MCF 10A (cell line): ENCODE measurements at regions of chr4 and their contacts with region 1.

Region 1: DNA sequence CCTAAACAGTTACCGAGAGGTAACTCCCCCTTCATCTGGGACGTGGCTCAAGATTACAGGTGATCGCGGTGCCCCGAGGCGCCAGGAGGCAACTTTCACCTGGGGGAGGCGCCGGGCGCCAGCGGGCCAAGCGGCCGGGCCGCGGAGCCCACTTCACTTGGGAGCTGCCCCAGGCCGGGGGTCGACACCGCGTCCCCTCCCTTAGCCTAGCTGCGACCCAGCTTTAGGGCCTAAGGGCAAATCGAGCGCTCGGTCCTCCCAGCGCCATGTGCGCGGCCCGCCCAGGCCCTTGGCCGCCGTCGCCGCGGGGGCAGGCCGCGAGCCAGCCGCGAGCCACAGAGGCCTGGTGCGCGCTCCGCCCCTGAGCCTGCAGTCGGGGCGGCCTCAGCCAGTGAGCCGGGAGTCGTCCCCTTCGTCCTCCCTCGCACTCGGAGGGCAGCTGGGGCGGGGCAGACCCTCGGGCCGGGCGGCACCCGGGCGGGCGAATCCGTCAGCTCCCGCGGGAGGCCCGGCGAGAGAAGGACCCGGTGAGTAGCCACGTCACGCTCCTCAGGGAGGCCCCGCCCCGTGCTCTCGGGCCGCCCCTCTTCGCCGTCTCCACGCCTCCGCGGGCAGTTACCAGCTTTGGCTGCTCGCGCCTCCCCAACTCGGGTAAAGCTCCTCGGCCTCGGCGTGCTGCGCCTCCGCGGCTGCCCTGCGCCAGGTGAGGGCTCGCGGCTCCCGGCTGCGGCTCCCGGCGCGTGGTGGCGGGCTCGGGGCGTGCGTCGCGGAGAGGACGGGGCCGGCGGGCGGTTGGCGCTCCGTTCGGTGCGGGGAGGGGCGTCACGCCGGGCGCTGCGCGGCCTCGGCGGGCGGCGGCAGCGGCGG is at the start of gene LARP1B:
- DNase-seq: peak; percentile 97
- H3K4me3 Mint-ChIP-seq: peak within 1 kb of the TSS; percentile 91
- H3K27ac Mint-ChIP-seq: peak within 1 kb of the TSS; percentile 96
- H3K4me1 Mint-ChIP-seq: peaks cover 6% of the 10 kb centered on the region
- H3K27me3 Mint-ChIP-seq: no peaks in the 10 kb centered on the region
- CTCF ChIP-seq: no peak
- total RNA-seq, gene LARP1B: 56.1 and 62.8 TPM in 2 replicates

Region 2: GRCh38 chr4:127868196-127868595 is 192.7 kb before region 1 on chr4:
- CTCF ChIA-PET with region 1: no interaction called
- POLR2A ChIA-PET with region 1: no interaction called
- intact Hi-C with region 1: no loop called
- DNase-seq: no peak
- H3K4me3 Mint-ChIP-seq: no peak overlapping the region
- H3K27ac Mint-ChIP-seq: no peak overlapping the region
- H3K4me1 Mint-ChIP-seq: peaks cover 23% of the 10 kb centered on the region
- H3K27me3 Mint-ChIP-seq: no peaks in the 10 kb centered on the region
- CTCF ChIP-seq: no peak

Region 3: GRCh38 chr4:127880764-127881562 is 180.0 kb before region 1 on chr4 and contains the start of gene PLK4:
- CTCF ChIA-PET with region 1: no interaction called
- POLR2A ChIA-PET with region 1: interaction called, 17 read pairs
- intact Hi-C with region 1: loop called (anchors 10 kb)
- DNase-seq: peak; percentile 96
- H3K4me3 Mint-ChIP-seq: peak within 1 kb of the TSS; percentile 100
- H3K27ac Mint-ChIP-seq: peak within 1 kb of the TSS; percentile 99
- H3K4me1 Mint-ChIP-seq: peaks cover 18% of the 10 kb centered on the region
- H3K27me3 Mint-ChIP-seq: no peaks in the 10 kb centered on the region
- CTCF ChIP-seq: no peak
- total RNA-seq, gene PLK4: 8.9 and 10.9 TPM in 2 replicates

Region 4: DNA sequence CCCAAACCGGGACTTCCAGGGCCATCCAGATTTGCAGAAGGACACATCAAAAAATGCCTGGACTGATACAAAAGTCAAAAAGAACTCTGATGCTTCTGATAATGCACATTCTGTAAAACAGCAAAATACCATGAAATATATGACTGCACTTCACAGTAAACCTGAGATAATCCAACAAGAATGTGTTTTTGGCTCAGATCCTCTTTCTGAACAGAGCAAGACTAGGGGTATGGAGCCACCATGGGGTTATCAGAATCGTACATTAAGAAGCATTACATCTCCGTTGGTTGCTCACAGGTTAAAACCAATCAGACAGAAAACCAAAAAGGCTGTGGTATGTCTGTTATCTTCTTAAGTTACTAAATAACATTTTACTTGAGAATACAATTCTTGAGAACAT is 171.0 kb before region 1 on chr4:
- CTCF ChIA-PET with region 1: no interaction called
- POLR2A ChIA-PET with region 1: interaction called, 10 read pairs
- intact Hi-C with region 1: loop called (anchors 10 kb)
- DNase-seq: no peak
- H3K4me3 Mint-ChIP-seq: no peak overlapping the region
- H3K27ac Mint-ChIP-seq: peak overlapping the region; percentile 35
- H3K4me1 Mint-ChIP-seq: peaks cover 21% of the 10 kb centered on the region
- H3K27me3 Mint-ChIP-seq: no peaks in the 10 kb centered on the region
- CTCF ChIP-seq: no peak

Region 5: GRCh38 chr4:128130621-128131020 is 69.7 kb after region 1 on chr4:
- CTCF ChIA-PET with region 1: no interaction called
- POLR2A ChIA-PET with region 1: no interaction called
- intact Hi-C with region 1: no loop called
- DNase-seq: peak; percentile 1
- H3K4me3 Mint-ChIP-seq: no peak overlapping the region
- H3K27ac Mint-ChIP-seq: peak overlapping the region; percentile 16
- H3K4me1 Mint-ChIP-seq: no peaks in the 10 kb centered on the region
- H3K27me3 Mint-ChIP-seq: no peaks in the 10 kb centered on the region
- CTCF ChIP-seq: no peak